HepG2 (cell line): ENCODE measurements at regions of chr3 and their contacts with region 1.

Region 1: DNA sequence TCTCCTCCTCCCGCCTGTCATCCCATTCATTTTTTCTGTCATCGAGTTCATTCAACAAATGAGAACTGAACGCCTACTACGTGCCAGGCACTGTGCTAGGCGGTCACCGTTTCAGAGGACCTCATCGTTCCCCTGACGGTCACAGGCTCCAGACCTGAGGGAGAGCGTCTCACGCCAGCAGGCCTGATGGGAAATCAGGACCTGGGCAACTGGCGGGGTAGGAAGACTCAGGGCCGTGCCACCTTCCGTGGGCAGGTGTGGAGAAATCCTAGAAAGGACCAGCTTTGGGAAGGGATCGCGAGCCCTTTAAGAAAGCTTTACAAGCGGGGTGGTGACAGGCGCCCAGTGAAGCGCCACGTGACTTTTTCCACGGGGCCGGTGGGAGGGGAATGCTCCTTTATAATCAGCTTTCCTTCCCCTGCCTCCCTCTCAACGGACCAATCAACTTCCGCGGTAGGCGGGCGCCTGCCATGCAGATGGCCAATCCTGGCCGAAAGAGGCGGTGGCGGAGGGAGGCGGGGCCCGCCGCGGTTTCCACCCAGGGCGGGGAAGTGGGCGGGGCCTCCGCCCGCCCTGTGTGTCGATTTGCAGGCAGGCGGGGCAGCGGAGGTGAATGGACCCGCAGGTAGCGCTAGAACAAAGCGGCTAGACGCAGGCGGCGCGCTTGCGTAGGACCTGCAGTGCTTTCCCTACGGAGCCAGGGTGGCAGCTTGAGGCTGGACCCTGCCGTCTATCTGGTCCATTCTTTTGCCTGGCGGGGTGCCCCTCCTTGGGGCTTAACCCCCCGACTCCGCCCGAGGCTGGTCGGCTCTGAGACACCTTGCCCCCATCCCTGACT is 816 bp upstream of the DUSP7 start:
- DNase-seq: peak; percentile 97
- ATAC-seq: peak; percentile 81
- H3K4me3 ChIP-seq: peak overlapping the region; percentile 62 to 83 (median 68)
- H3K27ac ChIP-seq: peak overlapping the region; percentile 58
- H3K4me1 ChIP-seq: peaks cover 50% of the 10 kb centered on the region
- H3K27me3 ChIP-seq: peaks cover 4 to 31% of the 10 kb centered on the region in 2 experiments; a peak in 4 of 5 replicates
- CTCF ChIP-seq: peak; percentile 76
- EP300 ChIP-seq: 0 out of 4 replicates have a peak, but pooled peaks of 1 of the 2 experiments have one; percentile 7
- POLR2A ChIP-seq: no peak
- RAD21 ChIP-seq: 0 out of 2 replicates have a peak, but pooled peaks have one; percentile 11

Region 2: DNA sequence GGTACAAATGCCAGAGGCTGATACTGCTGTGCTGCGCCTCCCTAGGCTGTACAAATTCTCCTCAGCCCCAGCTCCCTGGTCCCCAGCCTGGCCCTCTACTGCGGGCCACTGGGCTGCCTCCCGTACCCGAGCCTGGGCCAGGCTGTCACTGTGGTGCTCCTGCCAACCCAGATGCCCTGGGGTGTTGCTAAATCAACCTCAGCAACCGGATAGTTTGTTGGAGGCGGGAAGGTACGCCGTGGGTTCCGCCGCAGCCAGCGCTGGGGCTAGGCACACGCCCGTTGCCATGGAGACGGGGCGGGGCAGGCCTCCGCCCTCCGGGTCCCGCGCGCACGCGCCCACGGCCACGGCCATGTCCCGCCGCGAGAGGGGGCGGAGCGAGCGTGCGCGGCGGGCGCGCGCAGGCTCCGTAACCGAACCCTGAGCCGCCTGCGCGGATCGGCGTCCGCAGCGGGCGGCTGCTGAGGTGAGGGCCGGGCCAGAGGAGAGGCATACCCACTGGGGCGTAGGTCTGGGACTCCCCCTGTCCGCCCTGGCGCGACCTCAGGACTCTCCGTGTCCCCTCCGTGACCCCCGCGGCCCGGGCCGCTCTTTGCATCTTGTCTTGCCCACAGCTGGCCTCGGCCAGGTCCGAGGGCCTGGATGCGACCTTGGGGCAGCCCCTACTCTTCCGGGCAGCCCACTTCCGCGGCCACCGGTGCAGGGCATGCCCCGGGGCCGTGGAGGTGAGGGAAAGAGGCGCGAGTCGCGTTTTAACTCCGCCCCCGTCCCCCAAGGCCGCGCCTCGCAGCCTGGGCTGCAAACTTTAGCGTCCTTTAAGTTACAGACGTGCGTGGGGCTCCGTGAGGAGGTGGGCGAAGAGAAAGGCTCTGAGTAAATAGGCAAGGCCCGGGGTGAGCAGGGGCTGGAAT is 386.1 kb before region 1 on chr3 and contains the start of gene TEX264:
- CTCF ChIA-PET with region 1: no interaction called
- POLR2A ChIA-PET with region 1: no interaction called
- in situ Hi-C with region 1: no loop called
- intact Hi-C with region 1: no loop called
- DNase-seq: peak; percentile 59
- ATAC-seq: peak; percentile 76
- H3K4me3 ChIP-seq: peak within 1 kb of the TSS; percentile 79 to 99 (median 80)
- H3K27ac ChIP-seq: peak within 1 kb of the TSS; percentile 89
- H3K4me1 ChIP-seq: peaks cover 44% of the 10 kb centered on the region
- H3K27me3 ChIP-seq: no peaks in the 10 kb centered on the region
- CTCF ChIP-seq: 0 out of 2 replicates have a peak, but pooled peaks have one; percentile 6
- EP300 ChIP-seq: no peak
- POLR2A ChIP-seq: peak; percentile 76 to 89
- RAD21 ChIP-seq: peak; percentile 43; the same call in 1 of the 2 replicates
- total RNA-seq, gene TEX264: 18.8 and 35.2 TPM in 2 replicates

Region 3: GRCh38 chr3:51974963-51975851 is 82.0 kb before region 1 on chr3 and contains the start of gene ABHD14A:
- CTCF ChIA-PET with region 1: no interaction called
- POLR2A ChIA-PET with region 1: interaction called, 10 read pairs
- in situ Hi-C with region 1: no loop called
- intact Hi-C with region 1: no loop called
- DNase-seq: peak; percentile 37
- ATAC-seq: peak; percentile 81
- H3K4me3 ChIP-seq: peak within 1 kb of the TSS; percentile 75 to 82 (median 77)
- H3K27ac ChIP-seq: peak within 1 kb of the TSS; percentile 97
- H3K4me1 ChIP-seq: peaks cover 45% of the 10 kb centered on the region
- H3K27me3 ChIP-seq: no peaks in the 10 kb centered on the region; a peak in 1 of 5 replicates
- CTCF ChIP-seq: no peak; the same call in 1 of the 2 replicates
- EP300 ChIP-seq: no peak
- POLR2A ChIP-seq: peak in 1 of 2 experiments; percentile 60; a peak in 2 of 4 replicates
- RAD21 ChIP-seq: peak; percentile 60
- total RNA-seq, gene ABHD14A: 12.3 and 29.5 TPM in 2 replicates

Region 4: DNA sequence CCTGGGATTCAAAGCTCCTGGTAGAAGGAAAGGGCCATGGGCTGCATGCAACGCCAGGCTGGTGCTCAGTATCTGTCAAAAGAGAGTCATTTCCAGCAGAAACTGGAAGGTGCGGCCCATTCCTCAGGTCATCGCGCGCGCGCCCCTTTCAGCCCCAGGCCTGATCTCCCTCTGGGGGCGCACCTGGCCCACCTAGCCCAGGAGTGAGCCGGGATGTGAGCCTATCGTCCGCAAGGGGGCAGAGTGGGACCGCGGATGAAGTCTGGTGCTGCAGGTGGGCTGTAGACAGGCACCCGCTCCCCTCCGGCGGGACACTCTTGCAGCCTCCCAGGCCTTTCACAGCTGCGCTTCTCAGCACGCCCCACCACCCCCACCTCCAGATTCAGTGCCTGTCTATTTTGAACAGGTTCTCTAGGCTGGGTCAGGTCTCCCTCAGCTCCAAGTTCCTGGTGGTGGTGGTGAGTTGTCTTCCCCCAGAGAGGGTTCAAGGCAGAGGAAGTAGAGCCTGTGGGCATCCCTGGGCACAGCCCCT is 55.7 kb before region 1 on chr3:
- CTCF ChIA-PET with region 1: interaction called, 14 read pairs
- POLR2A ChIA-PET with region 1: interaction called, 19 read pairs
- in situ Hi-C with region 1: no loop called
- intact Hi-C with region 1: loop called (anchors 2 kb)
- DNase-seq: peak; percentile 78
- ATAC-seq: peak; percentile 83
- H3K4me3 ChIP-seq: peak overlapping the region in 1 of 3 experiments; percentile 42; a peak in 1 of 6 replicates
- H3K27ac ChIP-seq: no peak overlapping the region
- H3K4me1 ChIP-seq: peaks cover 60% of the 10 kb centered on the region
- H3K27me3 ChIP-seq: peaks cover 0 to 37% of the 10 kb centered on the region in 2 experiments; a peak in 3 of 5 replicates
- CTCF ChIP-seq: peak; percentile 99
- EP300 ChIP-seq: no peak
- POLR2A ChIP-seq: no peak
- RAD21 ChIP-seq: peak; percentile 99

Region 5: DNA sequence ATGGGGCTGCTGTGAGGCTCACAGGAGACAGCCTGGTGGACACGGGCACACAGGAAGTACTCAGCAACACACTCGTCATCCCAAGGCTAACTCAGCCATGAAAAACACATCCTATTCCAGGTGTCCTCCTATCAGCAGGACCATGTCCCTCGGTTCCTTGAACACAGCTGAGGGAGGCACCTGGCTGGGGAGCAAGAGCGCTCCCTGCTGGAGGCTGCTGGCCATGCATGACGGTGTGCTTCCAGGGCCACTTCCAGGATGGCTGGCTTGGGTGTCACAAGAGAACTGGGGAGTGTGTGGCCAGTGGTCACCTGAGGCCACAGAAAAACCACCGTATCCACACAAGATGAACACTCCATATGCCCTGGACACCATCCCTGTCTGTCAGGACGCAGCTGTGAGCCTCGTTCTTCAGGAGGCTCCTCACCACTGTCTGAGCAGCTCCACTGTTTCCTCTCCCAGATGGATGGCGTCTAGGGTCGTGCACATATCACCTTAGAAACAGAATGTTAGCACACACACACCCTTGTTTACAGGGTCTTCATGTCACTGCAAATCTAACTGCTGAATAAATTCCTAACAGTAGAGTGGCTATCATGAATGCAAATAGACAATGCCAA is 66.0 kb after region 1 on chr3:
- CTCF ChIA-PET with region 1: interaction called, 5 read pairs
- POLR2A ChIA-PET with region 1: interaction called, 5 read pairs
- in situ Hi-C with region 1: no loop called
- intact Hi-C with region 1: loop called (anchors 1 kb)
- DNase-seq: peak; percentile 39
- ATAC-seq: peak; percentile 92
- H3K4me3 ChIP-seq: no peak overlapping the region
- H3K27ac ChIP-seq: no peak overlapping the region
- H3K4me1 ChIP-seq: peaks cover 7% of the 10 kb centered on the region
- H3K27me3 ChIP-seq: no peaks in the 10 kb centered on the region
- CTCF ChIP-seq: peak; percentile 100
- EP300 ChIP-seq: no peak
- POLR2A ChIP-seq: no peak
- RAD21 ChIP-seq: peak; percentile 96